ENCODE measurements at regions of chr7 and their contacts with region 1.

Region 1: DNA sequence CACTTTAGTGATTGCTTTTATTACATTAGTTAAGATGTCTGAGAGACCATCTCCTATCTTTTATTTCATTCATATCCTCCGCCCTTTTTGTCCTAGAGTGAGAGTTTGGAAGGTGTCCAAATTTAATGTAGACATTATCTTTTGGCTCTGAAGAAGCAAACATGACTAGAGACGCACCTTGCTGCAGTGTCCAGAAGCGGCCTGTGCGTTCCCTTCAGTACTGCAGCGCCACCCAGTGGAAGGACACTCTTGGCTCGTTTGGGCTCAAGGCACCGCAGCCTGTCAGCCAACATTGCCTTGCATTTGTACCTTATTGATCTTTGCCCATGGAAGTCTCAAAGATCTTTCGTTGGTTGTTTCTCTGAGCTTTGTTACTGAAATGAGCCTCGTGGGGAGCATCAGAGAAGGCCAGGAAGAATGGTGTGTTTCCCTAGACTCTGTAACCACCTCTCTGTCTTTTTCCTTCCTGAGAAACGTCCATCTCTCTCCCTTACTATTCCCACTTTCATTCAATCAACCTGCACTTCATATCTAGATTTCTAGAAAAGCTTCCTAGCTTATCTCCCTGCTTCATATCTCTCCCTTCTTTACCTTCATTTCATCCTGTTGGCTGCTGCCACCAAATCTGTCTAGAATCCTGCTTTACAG is 10.4 kb upstream of the CLCN1 start:
- DNase-seq: peak; percentile 74 to 75
- ATAC-seq: peak; percentile 62 to 93 (median 86)
- H3K4me3 ChIP-seq: no peak overlapping the region
- H3K27ac ChIP-seq: no peak overlapping the region
- H3K4me1 ChIP-seq: peaks cover 0 to 35% (median 3%) of the 10 kb centered on the region in 9 donors
- H3K27me3 ChIP-seq: no peaks in the 10 kb centered on the region
- CTCF ChIP-seq: peak; percentile 49 to 88 (median 80)

Region 2: DNA sequence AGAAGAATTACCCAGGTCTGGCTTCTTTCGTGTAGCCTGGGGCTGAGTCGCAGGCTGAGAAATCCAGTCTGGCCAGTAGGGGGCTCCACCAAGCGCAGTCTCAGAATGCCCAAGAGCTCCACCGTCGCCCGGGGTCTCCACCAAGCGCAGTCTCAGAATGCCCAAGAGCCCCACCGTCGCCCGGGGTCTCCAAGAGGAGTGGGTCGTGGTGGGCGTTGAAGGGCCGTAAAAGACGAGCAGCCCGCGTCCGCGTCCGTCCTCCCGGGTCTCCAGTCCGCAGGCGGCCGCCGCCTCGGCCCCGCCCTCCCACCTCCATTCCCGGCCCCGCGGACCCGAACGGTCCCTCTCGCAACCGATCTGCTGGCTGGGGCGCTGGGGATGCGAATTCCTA is 74.7 kb after region 1 on chr7:
- intact Hi-C with region 1: loop called in 1 of 10 experiments (anchors 5 kb)
- DNase-seq: peak; percentile 89 to 91
- ATAC-seq: peak; percentile 60 to 88 (median 76)
- H3K4me3 ChIP-seq: peak overlapping the region; percentile 79 to 100 (median 96)
- H3K27ac ChIP-seq: peak overlapping the region; percentile 97 to 100 (median 100)
- H3K4me1 ChIP-seq: peaks cover 8 to 82% (median 45%) of the 10 kb centered on the region in 9 donors
- H3K27me3 ChIP-seq: no peaks in the 10 kb centered on the region
- CTCF ChIP-seq: peak; percentile 85 to 95 (median 92)